ENCODE measurements at regions of chr1 and their contacts with region 1.

Region 1: GRCh38 chr1:161792740-161793139 is 26.6 kb downstream of the ATF6 start:
- DNase-seq: peak; percentile 54 to 75 (median 72)
- H3K4me3 ChIP-seq: no peak overlapping the region
- H3K27ac ChIP-seq: no peak overlapping the region
- H3K4me1 ChIP-seq: no peaks in the 10 kb centered on the region
- H3K27me3 ChIP-seq: no peaks in the 10 kb centered on the region

Region 2: DNA sequence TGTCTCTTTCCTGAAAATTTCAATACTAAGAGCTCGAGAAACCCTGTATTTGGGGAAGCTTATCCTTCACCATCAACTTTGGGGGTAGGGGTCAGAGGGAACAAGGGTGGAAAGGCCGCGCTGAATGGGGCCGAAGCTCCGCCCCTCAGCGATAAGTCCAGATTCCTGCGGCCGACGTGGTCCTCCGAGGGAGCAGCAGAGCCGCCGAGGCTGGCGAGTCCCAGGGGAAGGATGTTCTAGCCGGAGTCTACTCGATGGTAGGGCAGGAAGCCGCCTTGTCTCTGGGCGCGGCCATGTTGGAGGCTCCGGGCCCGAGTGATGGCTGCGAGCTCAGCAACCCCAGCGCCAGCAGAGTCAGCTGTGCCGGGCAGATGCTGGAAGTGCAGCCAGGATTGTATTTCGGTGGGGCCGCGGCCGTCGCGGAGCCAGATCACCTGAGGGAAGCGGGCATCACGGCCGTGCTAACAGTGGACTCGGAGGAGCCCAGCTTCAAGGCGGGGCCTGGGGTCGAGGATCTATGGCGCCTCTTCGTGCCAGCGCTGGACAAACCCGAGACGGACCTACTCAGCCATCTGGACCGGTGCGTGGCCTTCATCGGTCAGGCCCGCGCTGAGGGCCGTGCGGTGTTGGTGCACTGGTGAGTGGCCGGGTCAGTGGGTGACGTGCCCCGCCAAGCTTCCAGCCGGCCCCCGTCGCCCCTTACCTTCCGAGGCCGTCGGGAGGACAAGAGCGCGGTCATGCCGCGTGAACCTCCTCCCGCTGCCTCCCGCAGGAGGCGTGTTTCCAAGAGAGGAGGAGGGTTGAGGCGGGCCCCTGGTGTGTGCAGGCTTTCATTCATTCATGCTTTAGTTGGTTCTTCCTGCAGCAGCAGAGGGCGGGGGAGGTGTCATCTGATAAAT is 43.0 kb before region 1 on chr1 and contains the start of gene DUSP12:
- CTCF ChIA-PET with region 1: no interaction called
- POLR2A ChIA-PET with region 1: no interaction called
- DNase-seq: peak; percentile 93 to 95 (median 95)
- H3K4me3 ChIP-seq: peak within 1 kb of the TSS; percentile 84 to 100 (median 98)
- H3K27ac ChIP-seq: peak within 1 kb of the TSS; percentile 40 to 85
- H3K4me1 ChIP-seq: peaks cover 3 to 17% (median 12%) of the 10 kb centered on the region in 4 experiments
- H3K27me3 ChIP-seq: no peaks in the 10 kb centered on the region

Region 3: DNA sequence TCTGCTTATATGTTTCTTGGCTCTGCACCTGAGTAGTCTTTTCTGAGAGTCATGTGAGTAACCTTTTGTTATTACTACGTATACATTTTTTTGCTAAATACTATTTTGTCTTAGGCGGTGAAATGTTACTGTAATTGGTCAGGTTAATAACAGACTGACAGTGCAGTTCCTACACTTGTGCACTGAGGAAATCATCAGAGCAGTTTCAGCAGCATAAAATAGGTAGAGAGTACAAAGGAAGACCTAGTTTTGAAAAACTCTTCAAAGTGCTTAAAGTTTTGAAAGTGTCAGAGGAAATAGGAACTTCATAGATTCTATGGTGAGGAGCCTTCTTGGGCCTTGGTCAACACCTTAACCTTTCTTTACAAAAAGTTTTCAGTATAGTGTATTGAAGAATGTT is 15.5 kb before region 1 on chr1:
- CTCF ChIA-PET with region 1: interaction called, 12 read pairs
- POLR2A ChIA-PET with region 1: no interaction called
- DNase-seq: no peak
- H3K4me3 ChIP-seq: no peak overlapping the region
- H3K27ac ChIP-seq: no peak overlapping the region
- H3K4me1 ChIP-seq: peaks cover 16 to 40% (median 26%) of the 10 kb centered on the region in 4 experiments
- H3K27me3 ChIP-seq: no peaks in the 10 kb centered on the region

Region 4: DNA sequence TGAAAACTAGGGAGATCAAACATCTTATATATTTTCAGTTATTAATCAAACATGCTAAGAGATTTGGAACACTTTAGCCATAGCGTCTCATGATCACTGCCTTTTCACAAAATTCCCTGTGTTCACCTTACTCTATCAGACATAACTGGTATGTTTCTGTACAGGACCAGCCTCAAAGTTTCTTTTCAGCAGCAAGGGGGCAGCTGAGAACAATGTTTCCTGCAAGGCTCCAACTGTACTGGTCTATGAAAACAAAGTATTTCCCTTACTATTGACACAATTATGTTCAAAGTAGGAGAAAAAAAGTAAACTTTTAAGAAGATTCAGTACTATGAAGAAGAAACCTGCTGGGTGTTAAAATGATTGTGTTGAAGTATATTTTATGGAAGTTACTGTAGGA is 71.8 kb after region 1 on chr1:
- CTCF ChIA-PET with region 1: interaction called, 10 read pairs
- POLR2A ChIA-PET with region 1: no interaction called
- DNase-seq: peak; percentile 27 to 53 (median 51)
- H3K4me3 ChIP-seq: no peak overlapping the region
- H3K27ac ChIP-seq: no peak overlapping the region
- H3K4me1 ChIP-seq: no peaks in the 10 kb centered on the region
- H3K27me3 ChIP-seq: no peaks in the 10 kb centered on the region

Region 5: DNA sequence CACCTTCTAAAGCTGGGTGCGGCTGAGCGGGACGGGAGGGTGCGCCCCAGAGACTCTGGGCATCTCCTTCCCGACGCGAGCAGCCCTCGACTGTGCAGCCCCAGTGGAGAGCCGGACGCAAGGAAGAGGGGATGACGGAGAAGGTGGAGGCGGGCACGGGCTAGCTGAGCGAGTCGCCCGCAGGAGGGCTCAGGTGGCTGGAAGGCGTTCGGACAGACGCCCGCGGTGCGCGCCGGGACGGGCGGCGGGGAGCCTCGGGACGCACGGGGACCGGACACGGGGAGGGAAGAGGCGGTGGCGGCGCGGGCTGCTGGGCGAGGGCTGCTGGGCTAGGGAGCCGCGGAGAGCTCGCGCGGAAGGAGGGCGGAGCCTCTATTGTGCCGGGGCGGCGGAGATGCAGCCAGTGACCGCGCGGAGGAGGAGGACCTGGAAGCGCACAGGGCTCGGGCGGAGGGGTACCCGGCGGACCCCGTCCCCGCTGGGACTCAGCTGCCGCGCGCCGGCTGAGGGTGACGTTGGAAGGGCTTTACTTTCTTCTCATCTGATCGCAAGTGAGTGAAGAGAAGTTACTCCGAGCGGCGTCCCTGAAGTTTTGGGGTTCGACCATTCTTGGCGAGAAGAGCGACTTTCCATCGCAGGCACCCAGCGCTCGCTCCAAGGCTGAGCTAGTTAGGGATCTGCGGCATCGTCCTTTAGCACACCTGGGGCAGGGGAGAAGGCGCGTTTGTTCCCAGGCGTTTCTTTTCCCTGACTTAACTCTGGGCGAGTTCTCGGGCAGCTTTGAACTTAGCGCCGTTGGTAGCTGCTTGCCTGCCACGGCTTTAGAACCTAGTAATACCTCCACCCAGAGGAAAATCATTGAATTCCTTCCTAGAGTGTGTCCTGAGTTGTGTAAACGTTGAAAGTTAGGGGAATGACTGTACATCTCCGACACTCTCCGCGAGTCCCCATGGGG is 231.1 kb after region 1 on chr1 and contains the start of gene OLFML2B:
- CTCF ChIA-PET with region 1: interaction called, 17 read pairs
- POLR2A ChIA-PET with region 1: no interaction called
- DNase-seq: peak; percentile 56 to 69 (median 67)
- H3K4me3 ChIP-seq: peak within 1 kb of the TSS; percentile 46 to 95 (median 83)
- H3K27ac ChIP-seq: no peak within 1 kb of the TSS
- H3K4me1 ChIP-seq: peaks cover 4 to 17% (median 12%) of the 10 kb centered on the region in 4 experiments
- H3K27me3 ChIP-seq: peaks cover 0 to 19% (median 5%) of the 10 kb centered on the region in 5 experiments

Measured in common myeloid progenitor, CD34-positive (primary cell).